Ovary (tissue), 10 donors: ENCODE measurements at regions of chr15 and their contacts with region 1.

Region 1: DNA sequence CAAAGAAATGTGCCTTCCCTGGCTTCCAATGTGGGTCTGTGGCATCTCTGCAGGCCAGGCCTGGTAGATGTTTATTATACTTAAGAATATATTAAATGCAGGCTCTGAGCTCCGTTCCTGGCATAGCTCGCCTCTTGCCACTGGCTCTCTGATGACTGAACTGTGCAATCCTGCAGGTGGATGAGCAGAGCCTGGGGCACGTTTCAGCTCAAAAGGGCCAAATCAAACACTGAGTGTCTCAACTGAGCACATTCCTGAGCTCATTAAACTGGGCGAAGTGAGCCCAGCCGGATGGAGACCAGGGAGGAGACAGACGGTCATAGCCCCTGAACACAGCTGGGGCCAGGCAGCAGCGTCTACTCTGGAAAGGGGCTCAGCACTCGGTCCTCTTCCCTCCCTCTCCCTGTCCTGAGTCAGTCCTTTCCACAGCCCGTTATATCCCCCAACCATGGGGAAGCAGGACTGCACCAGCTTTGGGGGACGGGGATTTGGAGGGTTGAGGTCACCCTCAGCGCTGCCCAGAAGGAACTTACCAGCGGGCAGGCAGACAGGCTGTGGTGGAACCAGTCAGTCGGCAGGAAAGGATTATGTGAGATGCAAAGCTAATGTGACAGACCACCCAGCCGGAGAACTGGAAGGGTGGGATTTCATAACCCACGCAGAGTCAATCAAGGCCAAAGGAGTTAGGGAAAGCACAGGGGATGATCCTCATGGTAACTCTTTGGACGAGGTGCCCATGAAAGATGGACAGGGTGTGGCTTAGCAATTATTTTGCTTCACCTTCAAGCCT is 77.4 kb upstream of the ANKRD34C start:
- DNase-seq: no peak
- H3K4me3 ChIP-seq: no peak overlapping the region
- H3K27ac ChIP-seq: no peak overlapping the region
- H3K4me1 ChIP-seq: no peaks in the 10 kb centered on the region
- H3K27me3 ChIP-seq: no peaks in the 10 kb centered on the region
- CTCF ChIP-seq: no peak
- EP300 ChIP-seq: no peak
- POLR2A ChIP-seq: no peak

Region 2: GRCh38 chr15:80679167-80680131 is 1474.4 kb after region 1 on chr15:
- intact Hi-C with region 1: loop called in 1 of 4 experiments (anchors 5 kb)
- DNase-seq: no peak
- H3K4me3 ChIP-seq: no peak overlapping the region
- H3K27ac ChIP-seq: no peak overlapping the region
- H3K4me1 ChIP-seq: no peaks in the 10 kb centered on the region
- H3K27me3 ChIP-seq: no peaks in the 10 kb centered on the region
- CTCF ChIP-seq: no peak
- EP300 ChIP-seq: no peak
- POLR2A ChIP-seq: no peak